Mammary epithelial cell (primary cell): ENCODE measurements at regions of chr1 and their contacts with region 1.

Region 1: DNA sequence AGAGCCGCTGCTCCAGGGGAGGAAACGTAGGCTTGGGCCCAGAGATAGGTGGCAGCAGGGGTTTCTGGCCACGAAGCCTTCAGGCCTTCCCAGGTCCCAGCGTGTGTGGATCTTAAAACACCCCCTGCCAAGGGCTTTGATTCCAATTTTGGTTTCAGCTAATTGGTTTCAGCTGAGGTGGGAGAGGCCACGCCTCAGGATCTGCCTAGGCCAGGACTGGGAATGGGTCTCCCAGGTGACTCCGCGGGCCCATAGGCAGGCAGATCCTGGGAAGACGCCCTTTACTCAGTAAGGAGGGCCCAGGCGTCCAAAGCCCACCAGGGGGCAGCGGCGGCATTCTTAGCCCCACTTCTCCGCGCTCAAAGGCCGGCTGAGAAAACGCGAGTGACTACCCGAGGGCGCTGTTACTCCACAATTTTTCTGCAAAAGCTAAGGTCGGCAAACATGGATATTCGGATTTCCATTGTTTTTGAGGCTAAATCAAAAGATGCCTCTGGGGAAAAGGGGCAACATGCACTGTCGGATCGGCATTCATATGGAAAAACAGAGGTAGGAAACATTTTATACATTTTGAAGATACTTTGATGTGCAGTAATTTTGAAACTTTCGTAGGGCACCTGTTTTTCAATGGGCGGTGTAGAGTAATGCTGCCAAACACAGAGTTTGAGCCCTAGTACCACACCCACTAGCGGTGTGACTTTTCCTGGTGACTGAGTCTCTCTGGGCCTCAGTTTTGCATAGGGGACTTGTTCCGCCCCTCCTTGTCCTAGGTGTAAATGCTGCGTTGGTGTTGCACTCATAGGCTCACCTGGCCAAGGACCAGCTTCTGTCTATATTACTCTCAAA is 31.8 kb upstream of the BCL10 start:
- DNase-seq: peak; percentile 67
- H3K4me3 ChIP-seq: no peak overlapping the region
- H3K27ac ChIP-seq: peak overlapping the region; percentile 2
- H3K4me1 ChIP-seq: peaks cover 10% of the 10 kb centered on the region
- H3K27me3 ChIP-seq: no peaks in the 10 kb centered on the region
- CTCF ChIP-seq: peak; percentile 91 to 98

Region 2: DNA sequence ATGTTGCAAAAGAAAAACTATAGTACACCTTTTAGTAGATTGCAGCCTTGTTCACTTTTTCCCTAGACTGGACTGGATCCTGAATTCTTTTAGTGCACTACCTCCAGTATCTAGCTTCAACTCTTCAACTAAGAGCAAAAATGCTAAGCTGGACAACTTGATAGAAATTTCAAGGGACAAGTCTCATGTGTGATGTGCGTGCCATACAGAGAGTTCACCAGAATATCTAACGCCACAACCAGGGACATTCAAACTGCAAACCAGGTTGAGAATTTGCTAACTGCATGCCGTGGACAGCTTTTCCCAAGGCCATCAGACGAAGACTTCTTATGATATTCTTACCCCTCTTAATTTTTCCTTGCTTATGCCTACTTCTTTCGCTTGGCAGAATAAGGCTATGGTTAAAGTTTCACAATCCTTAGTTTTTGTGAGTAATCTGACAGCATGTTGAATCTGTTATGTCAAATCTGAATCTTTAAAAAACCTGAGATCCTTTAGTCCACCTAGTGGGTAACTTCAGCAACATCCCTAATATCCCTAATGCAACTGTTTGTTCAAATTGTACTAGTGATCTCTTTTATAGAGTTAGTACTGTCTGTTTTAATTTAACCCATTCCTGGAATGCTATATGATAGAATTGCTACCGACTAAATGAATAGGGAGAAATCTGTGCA is 90.3 kb after region 1 on chr1:
- CTCF ChIA-PET with region 1: no interaction called
- dilution Hi-C with region 1: no loop called
- in situ Hi-C with region 1: loop called (anchors 5 to 10 kb)
- intact Hi-C with region 1: loop called (anchors 1 kb)
- DNase-seq: peak; percentile 51
- H3K4me3 ChIP-seq: no peak overlapping the region
- H3K27ac ChIP-seq: no peak overlapping the region
- H3K4me1 ChIP-seq: no peaks in the 10 kb centered on the region
- H3K27me3 ChIP-seq: no peaks in the 10 kb centered on the region
- CTCF ChIP-seq: peak; percentile 54 to 62

Region 3: DNA sequence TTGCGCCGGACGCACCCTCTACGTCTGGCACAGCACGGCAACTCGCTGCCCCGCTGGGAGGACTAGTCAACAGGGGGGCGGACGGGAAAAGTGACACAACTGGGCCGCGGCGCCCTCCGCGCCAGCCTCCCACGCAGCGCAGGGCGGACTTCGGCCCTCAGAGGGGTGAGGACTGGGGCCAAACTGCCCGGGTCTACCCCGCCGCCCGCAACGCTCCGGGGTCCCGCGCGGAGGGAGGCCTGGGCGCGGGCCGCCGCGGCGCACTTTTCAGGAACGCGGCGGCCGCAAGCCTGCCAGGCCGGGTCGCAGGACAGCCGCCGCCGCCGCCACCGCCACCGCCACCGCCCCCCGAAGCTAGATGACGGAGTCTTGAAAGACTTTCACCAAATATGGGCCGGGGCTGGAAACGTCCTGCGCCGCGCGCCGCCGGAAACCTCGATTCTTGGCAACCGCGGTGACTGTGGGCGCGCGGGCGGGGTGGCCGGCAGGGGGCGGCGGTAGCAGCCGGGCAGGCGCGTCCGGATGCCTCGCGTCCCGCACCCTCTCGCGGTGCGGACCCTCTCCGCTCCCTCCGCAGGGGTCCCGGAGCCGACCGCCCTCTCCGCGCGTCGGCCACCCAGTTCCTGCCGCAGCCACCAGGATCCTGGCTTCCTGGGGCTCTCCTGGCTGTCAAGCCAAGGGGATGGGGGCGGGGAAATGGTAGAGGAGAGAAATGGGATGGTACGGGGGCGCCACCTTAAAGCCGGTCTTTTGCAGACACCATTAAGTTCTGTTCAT is 268.6 kb after region 1 on chr1:
- CTCF ChIA-PET with region 1: no interaction called
- dilution Hi-C with region 1: loop called (anchors 25 kb)
- in situ Hi-C with region 1: loop called (anchors 10 to 25 kb)
- intact Hi-C with region 1: loop called (anchors 1 kb)
- DNase-seq: peak; percentile 62
- H3K4me3 ChIP-seq: peak overlapping the region; percentile 61 to 76 (median 64)
- H3K27ac ChIP-seq: peak overlapping the region; percentile 62
- H3K4me1 ChIP-seq: peaks cover 52% of the 10 kb centered on the region
- H3K27me3 ChIP-seq: no peaks in the 10 kb centered on the region
- CTCF ChIP-seq: peak; percentile 42 to 64

Region 4: DNA sequence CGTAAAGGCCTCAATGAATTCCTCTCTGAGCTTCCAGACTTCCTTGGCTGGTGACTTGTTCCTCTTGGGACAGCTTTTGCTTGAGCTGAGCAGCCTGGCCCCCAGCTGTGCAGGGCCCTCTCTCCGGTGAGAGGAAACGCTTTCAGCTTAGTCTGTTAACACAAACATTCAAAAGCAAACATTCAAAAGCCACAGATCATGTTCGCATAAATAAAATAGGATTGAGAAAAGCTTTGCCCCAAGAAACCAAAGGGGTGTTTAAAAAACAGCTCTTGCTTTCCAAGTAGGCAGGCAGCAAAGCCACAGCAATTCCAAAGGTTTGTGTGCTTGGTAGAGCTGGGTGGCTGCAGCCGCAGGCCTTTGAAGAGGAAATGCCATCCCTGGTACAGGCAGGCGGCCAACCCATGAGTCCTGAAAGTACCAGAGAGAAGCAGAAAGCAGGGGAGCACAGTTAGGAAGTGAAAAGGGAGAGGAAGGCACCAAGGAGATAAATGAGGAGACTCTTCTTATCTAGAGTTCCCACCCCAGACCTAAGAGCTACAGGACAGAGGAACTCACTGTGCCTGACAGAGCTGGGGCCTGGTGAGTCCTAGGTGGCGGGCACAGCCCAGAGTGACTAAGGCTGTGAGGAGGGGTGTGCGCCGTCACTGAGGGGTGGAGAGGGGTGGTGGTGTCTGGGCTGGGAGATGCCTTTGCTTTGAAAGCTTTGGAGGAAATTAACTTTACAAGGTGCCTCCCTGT is 320.8 kb after region 1 on chr1:
- CTCF ChIA-PET with region 1: no interaction called
- dilution Hi-C with region 1: no loop called
- in situ Hi-C with region 1: no loop called
- intact Hi-C with region 1: loop called (anchors 1 kb)
- DNase-seq: peak; percentile 49
- H3K4me3 ChIP-seq: no peak overlapping the region
- H3K27ac ChIP-seq: no peak overlapping the region
- H3K4me1 ChIP-seq: peaks cover 13% of the 10 kb centered on the region
- H3K27me3 ChIP-seq: no peaks in the 10 kb centered on the region
- CTCF ChIP-seq: no peak

Region 5: DNA sequence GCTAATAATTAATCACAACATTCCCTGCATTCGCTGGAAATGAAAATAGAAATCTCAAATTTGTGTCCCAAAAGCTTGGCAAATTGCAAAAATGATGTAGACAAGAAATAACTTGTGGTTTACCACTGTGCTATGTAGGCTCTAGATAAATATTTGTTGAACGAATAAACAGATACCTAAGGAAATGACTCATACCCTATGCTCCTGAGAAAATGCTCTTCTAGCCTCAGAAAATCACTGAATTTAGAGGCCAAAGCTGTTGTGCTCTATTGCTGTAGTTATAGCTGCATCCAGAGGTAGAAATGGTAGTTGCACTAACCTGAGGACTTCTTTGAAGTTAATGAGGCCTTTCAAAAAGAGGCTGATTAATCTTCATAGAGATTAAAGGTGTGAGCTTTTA is 542.0 kb after region 1 on chr1:
- CTCF ChIA-PET with region 1: no interaction called
- dilution Hi-C with region 1: no loop called
- in situ Hi-C with region 1: no loop called
- intact Hi-C with region 1: loop called (anchors 1 kb)
- DNase-seq: peak; percentile 79
- H3K4me3 ChIP-seq: no peak overlapping the region
- H3K27ac ChIP-seq: no peak overlapping the region
- H3K4me1 ChIP-seq: peaks cover 13% of the 10 kb centered on the region
- H3K27me3 ChIP-seq: peaks cover 12% of the 10 kb centered on the region
- CTCF ChIP-seq: peak in 1 of 2 donors; percentile 50

Region 6: DNA sequence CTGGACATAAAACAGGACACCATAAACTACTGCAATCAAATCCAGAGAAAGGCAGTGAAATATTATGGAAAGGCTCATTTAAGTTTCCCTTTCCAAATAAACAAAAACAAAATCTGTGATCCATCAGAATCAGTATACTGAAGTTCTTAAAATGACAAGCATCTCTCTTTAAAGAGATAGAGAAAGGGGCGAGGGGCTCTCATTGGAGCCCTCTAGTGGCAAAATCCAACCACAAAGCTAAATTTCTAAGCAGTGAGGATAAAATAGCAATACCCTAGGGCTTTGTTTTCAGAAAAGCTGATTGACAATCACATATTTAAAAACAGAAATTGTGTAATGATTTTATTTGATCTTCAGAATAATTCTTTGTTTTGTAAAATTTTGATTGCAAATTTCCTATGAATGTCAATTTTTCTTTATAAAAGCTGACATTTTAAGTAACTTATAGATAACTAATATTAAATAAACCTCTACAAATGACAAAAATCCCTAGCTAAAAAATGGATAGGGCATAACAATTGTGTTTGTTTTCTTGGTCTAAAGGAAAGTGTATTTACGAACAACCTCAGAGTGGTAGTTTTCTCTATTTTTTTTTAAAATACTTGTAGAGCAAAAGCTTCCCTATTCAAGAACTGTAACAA is 710.2 kb after region 1 on chr1:
- CTCF ChIA-PET with region 1: no interaction called
- dilution Hi-C with region 1: no loop called
- in situ Hi-C with region 1: no loop called
- intact Hi-C with region 1: loop called (anchors 1 kb)
- DNase-seq: peak; percentile 20
- H3K4me3 ChIP-seq: no peak overlapping the region
- H3K27ac ChIP-seq: no peak overlapping the region
- H3K4me1 ChIP-seq: no peaks in the 10 kb centered on the region
- H3K27me3 ChIP-seq: no peaks in the 10 kb centered on the region
- CTCF ChIP-seq: peak; percentile 60 to 73

Region 7: DNA sequence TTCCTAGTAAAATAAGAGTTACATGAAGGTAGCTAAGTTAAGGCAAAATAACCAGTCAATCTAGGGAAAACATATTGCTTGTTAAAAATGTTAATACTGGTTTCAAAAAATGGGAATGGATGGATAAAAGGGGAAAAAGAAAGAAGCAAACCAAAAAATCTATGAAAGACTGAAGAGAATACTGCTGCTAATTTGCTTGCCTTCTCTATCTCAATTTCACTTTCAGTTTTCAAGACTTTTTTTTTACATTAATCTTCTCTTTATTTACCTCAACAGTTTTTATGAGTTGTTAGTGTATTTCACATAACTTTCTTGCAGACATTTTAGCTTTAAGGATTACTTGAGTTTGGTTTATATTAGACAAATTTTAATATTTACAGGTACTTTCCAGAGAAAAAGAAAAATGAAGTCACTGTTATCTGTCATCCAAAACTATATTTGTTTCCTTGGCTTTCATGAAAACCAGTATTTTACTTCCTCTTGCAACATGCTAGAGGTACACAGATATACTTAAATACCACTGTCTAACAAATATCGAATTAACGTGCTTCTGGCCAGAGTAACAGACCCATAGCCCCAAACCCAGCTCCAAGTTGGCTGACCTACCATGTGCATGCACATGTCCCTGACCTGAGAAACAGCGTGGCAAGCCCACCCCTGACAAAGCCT is 777.7 kb after region 1 on chr1:
- CTCF ChIA-PET with region 1: no interaction called
- dilution Hi-C with region 1: no loop called
- in situ Hi-C with region 1: no loop called
- intact Hi-C with region 1: no loop called
- DNase-seq: no peak
- H3K4me3 ChIP-seq: no peak overlapping the region
- H3K27ac ChIP-seq: no peak overlapping the region
- H3K4me1 ChIP-seq: no peaks in the 10 kb centered on the region
- H3K27me3 ChIP-seq: no peaks in the 10 kb centered on the region
- CTCF ChIP-seq: no peak